ENCODE measurements at regions of chr6 and their contacts with region 1.

Region 1: GRCh38 chr6:38933432-38933831 is 115.1 kb upstream of the GLP1R start:
- DNase-seq: peak; percentile 32
- H3K4me3 ChIP-seq: no peak overlapping the region
- H3K27ac ChIP-seq: no peak overlapping the region
- H3K4me1 ChIP-seq: no peaks in the 10 kb centered on the region
- H3K27me3 ChIP-seq: peaks cover 1% of the 10 kb centered on the region
- CTCF ChIP-seq: peak; percentile 24 to 53

Region 2: DNA sequence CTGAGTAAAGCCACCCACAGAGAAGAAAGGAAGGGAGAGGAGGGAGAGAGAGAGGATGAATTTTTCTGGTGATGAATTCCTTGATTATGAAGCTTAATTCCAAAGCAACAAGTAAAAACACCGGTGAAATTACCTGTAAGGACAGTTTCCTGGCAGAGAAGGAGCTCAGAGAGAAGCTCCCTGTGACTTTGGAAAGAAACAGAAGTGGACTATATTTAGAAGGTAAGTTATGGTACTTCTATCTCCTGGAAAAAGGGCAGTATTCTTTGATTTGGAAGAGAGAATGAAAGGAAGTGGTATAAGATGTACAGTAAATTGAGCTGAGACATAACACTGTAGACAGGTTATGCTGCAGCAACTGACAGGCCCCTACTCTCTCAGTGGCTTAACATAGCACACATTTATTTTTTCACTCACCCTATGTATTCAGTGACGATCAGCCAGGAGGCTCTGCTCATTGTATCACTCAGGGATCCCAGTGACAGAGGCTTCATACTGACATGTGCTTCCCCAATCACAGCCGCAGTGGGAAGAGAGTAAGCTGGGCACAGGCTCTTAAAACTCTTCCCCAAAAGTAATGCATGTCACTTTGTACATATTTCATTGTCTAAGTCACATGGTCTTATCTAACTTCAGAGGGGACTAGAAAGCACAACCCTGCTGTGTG is 643.2 kb before region 1 on chr6:
- CTCF ChIA-PET with region 1: no interaction called
- dilution Hi-C with region 1: no loop called
- in situ Hi-C with region 1: no loop called
- intact Hi-C with region 1: no loop called
- DNase-seq: no peak
- H3K4me3 ChIP-seq: no peak overlapping the region
- H3K27ac ChIP-seq: no peak overlapping the region
- H3K4me1 ChIP-seq: no peaks in the 10 kb centered on the region
- H3K27me3 ChIP-seq: no peaks in the 10 kb centered on the region
- CTCF ChIP-seq: no peak

Region 3: DNA sequence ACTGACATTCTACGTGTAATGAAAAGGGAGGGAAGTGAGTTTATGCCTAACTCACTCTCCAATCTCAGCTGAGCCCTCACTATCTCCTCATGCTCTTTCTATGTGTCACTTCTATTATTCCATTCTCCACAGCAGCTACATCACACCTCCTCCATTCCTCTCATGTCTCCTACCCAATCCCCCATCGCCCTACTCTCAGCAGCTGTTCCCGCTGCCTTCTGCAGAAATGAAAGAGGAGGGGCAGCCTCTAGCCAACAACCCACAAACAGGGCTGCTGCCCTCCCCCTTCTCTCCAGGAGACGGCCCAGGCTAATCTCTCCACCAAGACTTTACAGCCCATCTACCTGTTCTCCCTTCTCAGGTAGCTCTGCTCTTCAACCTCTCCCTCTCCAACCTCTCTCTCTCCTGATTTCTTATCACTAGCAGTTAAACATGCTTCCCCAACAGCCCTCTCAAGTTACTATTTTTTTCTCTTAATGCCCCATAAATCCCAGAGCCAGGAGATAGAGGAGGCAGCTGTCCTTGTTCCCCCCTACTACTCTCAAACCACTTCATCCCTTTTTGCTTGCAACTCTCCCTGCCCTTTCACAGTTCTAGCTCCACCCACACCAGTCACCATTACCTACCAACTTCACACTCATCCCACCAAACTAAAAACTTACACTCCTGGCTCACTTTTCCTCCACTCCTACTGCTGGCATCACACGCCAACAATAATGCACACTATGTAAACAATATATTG is 430.2 kb before region 1 on chr6:
- CTCF ChIA-PET with region 1: no interaction called
- dilution Hi-C with region 1: no loop called
- in situ Hi-C with region 1: no loop called
- intact Hi-C with region 1: loop called (anchors 5 kb)
- DNase-seq: no peak
- H3K4me3 ChIP-seq: no peak overlapping the region
- H3K27ac ChIP-seq: no peak overlapping the region
- H3K4me1 ChIP-seq: no peaks in the 10 kb centered on the region
- H3K27me3 ChIP-seq: no peaks in the 10 kb centered on the region
- CTCF ChIP-seq: no peak

Region 4: DNA sequence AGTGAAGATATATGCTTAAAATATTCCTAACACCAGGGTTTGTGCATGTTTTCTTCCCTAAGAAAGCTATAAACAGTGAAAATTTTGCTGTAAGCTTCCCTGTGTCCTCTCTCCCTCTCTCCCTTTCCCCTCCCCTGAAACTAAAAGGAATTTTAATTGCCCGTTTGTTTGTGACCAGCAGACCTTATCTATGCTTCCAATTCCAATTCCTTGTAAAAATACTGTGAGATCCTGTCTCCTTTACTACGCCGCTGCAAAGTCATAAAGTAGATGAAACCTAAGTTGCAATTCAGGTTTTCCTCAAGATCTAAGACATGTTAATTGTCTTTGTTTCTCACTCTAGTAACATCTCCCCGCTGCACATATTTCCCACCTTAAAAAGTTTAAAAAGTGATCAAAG is 136.0 kb before region 1 on chr6:
- CTCF ChIA-PET with region 1: interaction called, 6 read pairs
- dilution Hi-C with region 1: no loop called
- in situ Hi-C with region 1: no loop called
- intact Hi-C with region 1: loop called (anchors 1 kb)
- DNase-seq: no peak
- H3K4me3 ChIP-seq: no peak overlapping the region
- H3K27ac ChIP-seq: no peak overlapping the region
- H3K4me1 ChIP-seq: peaks cover 19% of the 10 kb centered on the region
- H3K27me3 ChIP-seq: no peaks in the 10 kb centered on the region
- CTCF ChIP-seq: no peak

Region 5: GRCh38 chr6:39280247-39280731 is 346.9 kb after region 1 on chr6:
- CTCF ChIA-PET with region 1: no interaction called
- dilution Hi-C with region 1: no loop called
- in situ Hi-C with region 1: no loop called
- intact Hi-C with region 1: no loop called
- DNase-seq: peak; percentile 65
- H3K4me3 ChIP-seq: no peak overlapping the region
- H3K27ac ChIP-seq: no peak overlapping the region
- H3K4me1 ChIP-seq: peaks cover 8% of the 10 kb centered on the region
- H3K27me3 ChIP-seq: no peaks in the 10 kb centered on the region
- CTCF ChIP-seq: no peak